Testis (tissue), 5 donors: ENCODE measurements at regions of chr1 and their contacts with region 1.

Region 1: DNA sequence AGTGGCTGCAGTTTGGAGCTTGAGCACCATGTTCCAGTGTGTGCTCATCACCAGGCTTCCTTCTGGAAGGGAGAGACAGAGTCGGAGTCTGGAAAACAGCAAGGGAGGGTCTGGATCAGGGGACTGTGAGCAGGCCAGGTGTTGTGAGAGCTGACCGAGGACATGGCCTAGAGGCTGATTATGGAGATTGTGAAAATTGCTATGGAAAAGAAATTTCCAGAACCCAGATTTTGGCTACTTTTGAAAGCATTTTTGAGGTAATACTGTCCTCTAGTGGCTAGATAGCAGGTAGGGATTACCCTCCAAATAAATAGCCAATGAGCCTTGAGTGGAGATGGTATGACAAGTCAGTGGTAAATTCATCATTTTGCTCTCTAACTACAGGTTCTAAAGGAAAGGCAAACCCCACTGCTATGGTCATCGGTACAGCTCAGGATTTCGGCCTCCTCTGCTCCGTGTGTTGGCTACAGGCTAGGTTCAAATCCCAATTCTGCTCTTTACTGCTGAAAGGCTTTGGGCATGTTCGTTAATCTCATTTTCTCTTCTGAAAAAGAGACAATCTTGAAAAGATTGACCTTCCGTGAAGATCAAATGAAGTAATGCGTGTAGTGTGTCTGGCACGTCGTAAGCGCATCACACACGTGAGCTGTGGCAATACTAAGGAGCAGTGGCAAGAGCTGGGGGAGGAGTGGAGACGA is 1.0 kb upstream of the HAO2 start:
- DNase-seq: no peak
- H3K4me3 ChIP-seq: no peak overlapping the region
- H3K27ac ChIP-seq: no peak overlapping the region
- H3K4me1 ChIP-seq: no peaks in the 10 kb centered on the region
- H3K27me3 ChIP-seq: no peaks in the 10 kb centered on the region
- CTCF ChIP-seq: peak; percentile 82 to 88 (median 87)
- POLR2A ChIP-seq: no peak

Region 2: DNA sequence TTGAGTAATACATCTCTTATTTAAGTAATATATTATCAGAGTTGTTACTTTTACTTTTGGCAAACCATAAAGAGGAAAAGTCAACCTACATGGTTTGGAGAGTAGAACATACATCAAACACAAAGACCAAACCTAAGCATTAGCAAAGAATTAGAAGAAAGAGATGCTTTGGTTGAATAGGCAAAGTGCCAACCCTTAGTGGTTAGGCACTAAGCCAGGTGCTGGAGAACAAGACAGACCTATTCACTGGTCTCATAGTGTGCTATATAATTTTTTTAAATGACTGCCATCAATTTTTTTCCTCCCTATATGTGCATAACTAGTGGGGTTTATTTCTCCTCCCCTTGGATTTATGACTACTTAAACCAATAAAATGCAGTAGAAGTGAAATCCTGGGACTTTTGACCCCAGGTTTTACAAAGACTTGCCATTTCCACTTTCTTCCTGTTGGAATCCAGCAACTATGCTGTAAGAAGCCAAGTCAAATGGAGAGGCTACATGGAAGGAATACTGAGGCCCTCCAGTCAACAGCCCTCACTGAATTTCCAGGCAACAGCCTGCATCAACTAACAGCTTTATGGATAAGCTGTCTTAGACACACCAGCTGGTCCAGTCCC is 68.8 kb before region 1 on chr1:
- intact Hi-C with region 1: loop called (anchors 10 kb)
- DNase-seq: no peak
- H3K4me3 ChIP-seq: no peak overlapping the region
- H3K27ac ChIP-seq: no peak overlapping the region
- H3K4me1 ChIP-seq: no peaks in the 10 kb centered on the region
- H3K27me3 ChIP-seq: no peaks in the 10 kb centered on the region
- CTCF ChIP-seq: no peak
- POLR2A ChIP-seq: no peak

Region 3: DNA sequence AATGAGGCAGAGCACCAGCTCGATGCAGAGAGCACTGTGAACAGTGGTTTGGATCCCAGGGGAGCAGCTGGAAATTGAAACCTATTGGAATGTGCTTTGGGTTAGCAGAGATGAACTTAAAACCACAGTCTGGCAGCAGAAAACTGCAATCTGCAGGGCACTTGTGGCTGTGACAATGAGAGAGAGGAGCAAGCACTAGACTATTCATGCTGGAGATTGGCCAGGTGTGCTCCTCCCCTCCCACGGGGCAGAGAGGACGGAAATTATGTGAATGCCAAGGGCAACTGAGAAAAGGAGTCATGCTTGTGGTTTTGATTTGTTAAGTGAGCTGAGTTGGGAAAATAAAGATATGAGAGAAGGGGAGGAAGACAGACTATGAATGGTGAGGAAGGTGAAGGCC is 85.4 kb after region 1 on chr1:
- intact Hi-C with region 1: no loop called
- DNase-seq: no peak
- H3K4me3 ChIP-seq: no peak overlapping the region
- H3K27ac ChIP-seq: no peak overlapping the region
- H3K4me1 ChIP-seq: peaks cover 9% of the 10 kb centered on the region
- H3K27me3 ChIP-seq: no peaks in the 10 kb centered on the region
- CTCF ChIP-seq: no peak
- POLR2A ChIP-seq: no peak